Esophagus squamous epithelium (tissue), 5 donors: ENCODE measurements at regions of chr16 and their contacts with region 1.

Region 1: DNA sequence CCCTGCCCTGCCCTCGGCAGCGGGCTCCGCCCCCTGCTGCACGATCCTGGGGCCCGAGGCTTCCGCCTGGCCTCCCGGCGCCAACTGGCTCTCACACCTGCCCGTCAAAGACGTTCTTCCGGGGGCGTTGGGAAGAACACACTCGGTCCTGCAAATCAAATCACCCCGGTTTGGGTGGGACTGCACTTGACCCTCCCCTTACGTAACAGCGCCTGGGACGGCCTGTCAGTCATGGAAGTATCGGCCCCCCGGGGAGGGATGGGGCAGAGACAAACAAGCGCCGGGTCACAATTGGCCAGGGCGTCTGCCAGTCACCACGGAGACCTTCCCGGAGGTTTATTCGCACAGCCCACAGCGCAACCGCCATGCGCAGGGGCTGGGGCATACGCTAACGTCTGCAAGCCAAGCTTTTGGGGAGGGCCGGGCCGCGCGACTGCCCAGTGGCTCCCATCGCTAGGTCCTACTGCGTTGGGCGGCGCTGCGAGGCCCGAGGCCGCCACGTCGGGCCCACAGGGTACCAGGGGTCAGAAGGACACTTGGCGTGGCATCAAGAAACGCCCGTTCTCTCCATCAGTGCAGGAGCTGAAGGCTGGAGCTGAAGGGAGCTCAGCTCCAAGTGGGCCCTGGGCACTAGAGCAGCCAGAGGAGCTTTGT is 388 bp upstream of the AKTIP start:
- DNase-seq: peak; percentile 100
- H3K4me3 ChIP-seq: peak overlapping the region; percentile 63 to 98 (median 86)
- H3K27ac ChIP-seq: peak overlapping the region; percentile 92 to 99 (median 98)
- H3K4me1 ChIP-seq: peaks cover 20 to 45% (median 20%) of the 10 kb centered on the region in 3 donors
- H3K27me3 ChIP-seq: no peaks in the 10 kb centered on the region
- CTCF ChIP-seq: peak in 2 of 6 experiments; percentile 7 to 15
- POLR2A ChIP-seq: peak in 3 of 4 donors; percentile 84 to 96 (median 86)

Region 2: GRCh38 chr16:53061701-53062159 is 441.7 kb before region 1 on chr16:
- intact Hi-C with region 1: loop called (anchors 10 kb)
- DNase-seq: no peak
- H3K4me3 ChIP-seq: no peak overlapping the region
- H3K27ac ChIP-seq: peak overlapping the region; percentile 7 to 48 (median 24)
- H3K4me1 ChIP-seq: peaks cover 6 to 69% (median 15%) of the 10 kb centered on the region in 3 donors
- H3K27me3 ChIP-seq: no peaks in the 10 kb centered on the region
- CTCF ChIP-seq: peak in 1 of 6 experiments; percentile 0
- POLR2A ChIP-seq: no peak

Region 3: DNA sequence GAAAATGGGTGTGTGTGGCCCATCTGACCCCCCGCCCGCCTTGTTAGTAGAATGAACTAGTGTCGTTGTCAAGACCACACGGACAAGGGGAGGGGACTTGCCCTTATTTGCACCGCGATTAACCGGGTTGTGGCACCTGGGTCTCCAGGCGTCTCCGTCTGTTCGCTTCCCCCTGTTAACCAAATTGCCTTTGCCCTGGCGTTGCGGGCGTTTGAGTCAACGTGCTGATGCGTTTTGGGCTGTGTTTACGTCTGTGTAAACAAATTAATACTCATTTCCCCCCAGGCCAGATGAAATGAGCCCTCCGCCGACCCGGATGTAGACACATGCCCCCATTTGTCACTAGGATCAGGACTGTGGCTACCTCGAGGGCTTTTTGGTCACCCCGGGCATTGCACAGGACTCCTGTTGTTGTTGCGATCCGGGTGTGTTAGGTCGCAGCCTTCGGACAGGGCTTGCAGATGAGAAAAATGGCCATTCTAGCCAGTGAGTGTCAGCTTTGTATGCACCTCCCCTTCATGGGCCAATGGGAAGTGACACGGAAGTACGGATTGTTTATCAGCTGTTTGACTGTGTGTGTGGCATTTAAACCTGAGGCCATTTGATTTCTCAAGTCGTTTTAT is 68.2 kb before region 1 on chr16:
- intact Hi-C with region 1: loop called (anchors 10 kb)
- DNase-seq: peak; percentile 37
- H3K4me3 ChIP-seq: peak overlapping the region; percentile 86 to 99 (median 94)
- H3K27ac ChIP-seq: peak overlapping the region; percentile 96 to 99 (median 98)
- H3K4me1 ChIP-seq: peaks cover 0 to 28% (median 11%) of the 10 kb centered on the region in 3 donors
- H3K27me3 ChIP-seq: no peaks in the 10 kb centered on the region
- CTCF ChIP-seq: no peak
- POLR2A ChIP-seq: peak in 2 of 4 donors; percentile 53 to 60